ENCODE measurements at regions of chr7 and their contacts with region 1.

Region 1: DNA sequence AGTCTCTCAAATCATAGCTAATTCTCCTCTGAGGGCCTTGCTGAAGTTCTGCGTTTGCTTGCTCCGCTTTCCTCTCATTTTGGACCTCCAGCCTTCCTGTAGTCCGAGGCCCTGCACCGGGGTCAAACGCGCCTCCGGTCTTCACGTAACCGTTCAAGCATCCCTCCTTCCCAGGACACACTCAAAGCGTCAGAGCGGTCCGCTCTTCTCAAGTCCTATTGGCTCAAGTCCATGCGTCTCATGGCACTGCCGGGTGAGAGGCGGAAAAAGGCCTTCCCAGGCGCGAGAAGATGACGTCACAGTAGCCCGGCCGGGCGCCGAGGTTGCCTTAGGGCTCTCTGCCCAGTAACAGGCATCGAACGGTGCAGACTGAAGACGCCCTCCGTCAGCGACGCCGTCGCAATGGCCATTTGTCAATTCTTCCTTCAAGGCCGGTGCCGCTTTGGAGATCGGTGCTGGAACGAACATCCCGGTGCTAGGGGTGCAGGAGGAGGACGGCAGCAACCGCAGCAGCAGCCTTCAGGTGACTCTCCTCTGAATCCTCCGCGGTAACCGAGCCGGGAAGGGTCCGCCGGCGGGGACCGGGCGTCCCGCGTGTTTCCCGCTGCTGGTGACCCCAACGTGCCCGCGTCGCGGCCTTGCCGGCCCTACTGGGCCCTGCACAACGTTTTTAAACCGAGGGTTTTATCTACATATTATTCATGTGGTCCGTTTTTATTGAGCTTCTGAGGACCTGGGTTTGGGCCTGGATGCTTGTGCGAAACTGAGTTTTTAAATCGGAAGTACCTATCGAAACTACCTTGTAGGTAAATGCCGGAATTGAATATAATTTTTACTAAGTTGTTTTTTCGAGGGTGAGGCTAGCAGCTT is at the start of gene NUP42:
- DNase-seq: peak; percentile 97
- ATAC-seq: peak; percentile 95
- H3K4me3 ChIP-seq: peak within 1 kb of the TSS; percentile 74
- H3K27ac ChIP-seq: peak within 1 kb of the TSS; percentile 90
- H3K4me1 ChIP-seq: 0 out of 2 replicates have a peak, but pooled peaks cover 3% of the 10 kb centered on the region
- H3K27me3 ChIP-seq: no peaks in the 10 kb centered on the region
- CTCF ChIP-seq: no peak
- EP300 ChIP-seq: peak; percentile 42 to 62; a peak in 3 of 4 replicates
- POLR2A ChIP-seq: peak; percentile 99
- RAD21 ChIP-seq: no peak
- polyA plus RNA-seq, gene NUP42: 58.6 to 92.1 TPM

Region 2: DNA sequence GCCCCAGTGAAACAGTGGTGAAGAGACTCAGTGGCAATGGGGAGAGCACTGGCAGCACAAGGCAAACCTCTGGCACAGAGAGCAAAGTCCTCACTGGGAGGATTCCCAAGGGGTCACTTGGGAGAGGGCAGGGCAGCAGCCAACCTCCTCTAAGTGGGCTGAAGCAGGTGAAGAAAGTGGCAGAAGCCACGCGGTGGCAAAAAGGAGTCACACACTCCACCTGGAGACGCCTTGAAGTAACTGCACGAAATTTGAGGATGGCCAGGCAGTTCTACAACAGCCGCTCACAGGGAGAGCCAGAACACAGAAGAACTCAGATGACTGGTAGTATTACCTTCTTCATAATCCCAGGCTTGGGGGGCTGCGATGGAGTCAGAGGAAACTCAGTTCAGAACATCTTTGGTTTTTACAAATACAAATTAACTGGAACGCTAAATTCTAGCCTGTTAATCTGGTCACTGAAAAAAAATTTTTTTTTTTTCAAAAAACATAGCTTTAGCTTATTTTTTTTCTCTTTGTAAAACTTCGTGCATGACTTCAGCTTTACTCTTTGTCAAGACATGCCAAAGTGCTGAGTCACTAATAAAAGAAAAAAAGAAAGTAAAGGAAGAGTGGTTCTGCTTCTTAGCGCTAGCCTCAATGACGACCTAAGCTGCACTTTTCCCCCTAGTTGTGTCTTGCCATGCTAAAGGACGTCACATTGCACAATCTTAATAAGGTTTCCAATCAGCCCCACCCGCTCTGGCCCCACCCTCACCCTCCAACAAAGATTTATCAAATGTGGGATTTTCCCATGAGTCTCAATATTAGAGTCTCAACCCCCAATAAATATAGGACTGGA is 455.4 kb before region 1 on chr7:
- CTCF ChIA-PET with region 1: no interaction called
- POLR2A ChIA-PET with region 1: interaction called, 12 read pairs
- RAD21 ChIA-PET with region 1: no interaction called
- SMC1A ChIA-PET with region 1: no interaction called
- in situ Hi-C with region 1: no loop called
- intact Hi-C with region 1: no loop called
- DNase-seq: no peak
- ATAC-seq: peak; percentile 92
- H3K4me3 ChIP-seq: no peak overlapping the region
- H3K27ac ChIP-seq: no peak overlapping the region
- H3K4me1 ChIP-seq: peaks cover 5% of the 10 kb centered on the region; the same call in 1 of the 2 replicates
- H3K27me3 ChIP-seq: peaks cover 5 to 8% of the 10 kb centered on the region in 2 experiments
- CTCF ChIP-seq: peak; percentile 67 to 84 (median 77)
- EP300 ChIP-seq: no peak
- POLR2A ChIP-seq: no peak
- RAD21 ChIP-seq: peak; percentile 70

Region 3: DNA sequence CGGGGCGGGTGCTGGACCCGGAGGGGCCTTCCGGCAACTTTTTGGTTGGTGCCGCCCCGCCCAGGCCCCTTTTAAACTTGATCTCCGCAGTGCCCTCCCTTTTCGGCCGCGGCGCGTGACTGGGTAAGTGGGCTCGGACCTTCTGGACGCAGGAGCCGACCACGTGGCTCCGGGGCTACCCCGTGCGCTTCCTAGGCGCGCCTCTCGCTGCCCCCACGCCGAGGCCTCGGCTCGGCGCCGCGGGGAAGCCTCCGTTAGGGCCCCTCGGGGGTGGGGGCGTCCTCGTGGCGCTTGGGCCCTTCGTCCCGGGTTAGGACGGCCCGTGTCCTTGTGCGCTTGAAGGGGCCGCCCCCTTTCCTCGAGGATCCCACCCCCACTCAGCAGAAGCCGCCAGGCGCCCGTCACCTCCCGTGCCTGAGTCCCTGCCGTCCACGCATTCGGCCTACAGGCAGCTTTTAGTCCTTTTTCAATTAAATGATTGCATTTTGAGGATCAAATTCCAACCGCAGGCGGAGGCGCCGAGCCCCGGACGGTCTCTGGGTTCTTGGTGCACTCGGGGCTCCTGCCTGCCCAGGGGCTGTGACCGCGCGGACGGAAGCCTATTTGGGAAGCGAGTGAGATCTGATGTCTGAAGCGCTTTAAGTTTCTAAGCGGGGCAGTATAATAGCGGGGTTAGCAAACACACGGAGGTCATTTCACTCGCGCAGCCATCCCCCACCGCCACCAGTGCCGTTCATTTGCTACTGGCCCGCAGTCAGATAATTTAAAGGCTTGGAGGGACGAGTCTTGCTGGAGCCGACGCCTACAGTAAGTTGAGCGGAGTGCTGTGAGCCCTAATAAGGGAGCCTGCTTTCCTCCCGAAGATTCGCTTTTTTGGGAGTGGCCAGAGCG is 327.5 kb before region 1 on chr7:
- CTCF ChIA-PET with region 1: no interaction called
- POLR2A ChIA-PET with region 1: no interaction called
- RAD21 ChIA-PET with region 1: no interaction called
- SMC1A ChIA-PET with region 1: no interaction called
- in situ Hi-C with region 1: no loop called
- intact Hi-C with region 1: loop called (anchors 10 kb)
- DNase-seq: peak; percentile 63
- ATAC-seq: peak; percentile 84
- H3K4me3 ChIP-seq: peak overlapping the region; percentile 84
- H3K27ac ChIP-seq: peak overlapping the region; percentile 94
- H3K4me1 ChIP-seq: peaks cover 14% of the 10 kb centered on the region
- H3K27me3 ChIP-seq: no peaks in the 10 kb centered on the region
- CTCF ChIP-seq: peak in 1 of 3 experiments; percentile 44; a peak in 1 of 6 replicates
- EP300 ChIP-seq: 0 out of 4 replicates have a peak, but pooled peaks of 1 of the 2 experiments have one; percentile 21
- POLR2A ChIP-seq: peak; percentile 89
- RAD21 ChIP-seq: no peak

Region 4: DNA sequence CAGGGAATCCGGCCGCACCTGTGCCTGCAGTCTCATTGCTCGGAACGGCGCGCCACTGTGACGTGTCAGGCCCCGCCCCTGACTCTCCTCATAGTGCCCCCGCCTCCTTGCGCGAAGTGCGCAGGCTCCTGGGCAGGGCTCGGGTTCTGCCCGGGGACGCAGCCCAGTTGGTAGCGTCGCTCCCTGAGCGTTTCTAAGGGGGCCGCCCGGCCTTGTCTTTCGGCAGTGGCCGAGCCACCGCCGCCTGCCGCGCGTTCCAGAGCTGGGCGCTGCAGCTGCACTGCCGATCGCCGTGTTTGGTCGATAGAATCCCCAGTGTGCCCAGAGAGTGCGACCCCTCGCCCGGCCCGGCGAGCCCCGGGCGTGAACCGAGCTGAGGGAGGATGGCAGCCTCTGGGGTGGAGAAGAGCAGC is 76.3 kb before region 1 on chr7 and contains the start of gene KLHL7:
- CTCF ChIA-PET with region 1: interaction called, 14 read pairs
- POLR2A ChIA-PET with region 1: interaction called, 10 read pairs
- RAD21 ChIA-PET with region 1: interaction called, 7 read pairs
- SMC1A ChIA-PET with region 1: interaction called, 16 read pairs
- in situ Hi-C with region 1: no loop called
- intact Hi-C with region 1: loop called (anchors 1 kb)
- DNase-seq: peak; percentile 64
- ATAC-seq: peak; percentile 98
- H3K4me3 ChIP-seq: peak within 1 kb of the TSS; percentile 99
- H3K27ac ChIP-seq: peak within 1 kb of the TSS; percentile 77
- H3K4me1 ChIP-seq: peaks cover 7% of the 10 kb centered on the region; the same call in 1 of the 2 replicates
- H3K27me3 ChIP-seq: no peaks in the 10 kb centered on the region
- CTCF ChIP-seq: no peak
- EP300 ChIP-seq: no peak
- POLR2A ChIP-seq: peak; percentile 92
- RAD21 ChIP-seq: no peak
- polyA plus RNA-seq, gene KLHL7: 6.4 to 12.4 TPM

Region 5: GRCh38 chr7:23261843-23262452 is 80.0 kb after region 1 on chr7:
- CTCF ChIA-PET with region 1: interaction called, 50 read pairs
- POLR2A ChIA-PET with region 1: interaction called, 3 read pairs
- RAD21 ChIA-PET with region 1: interaction called, 15 read pairs
- SMC1A ChIA-PET with region 1: interaction called, 11 read pairs
- in situ Hi-C with region 1: no loop called
- intact Hi-C with region 1: no loop called
- DNase-seq: no peak
- ATAC-seq: peak; percentile 95
- H3K4me3 ChIP-seq: no peak overlapping the region
- H3K27ac ChIP-seq: no peak overlapping the region
- H3K4me1 ChIP-seq: peaks cover 11% of the 10 kb centered on the region
- H3K27me3 ChIP-seq: no peaks in the 10 kb centered on the region; a peak in 1 of 4 replicates
- CTCF ChIP-seq: peak; percentile 83 to 94 (median 86)
- EP300 ChIP-seq: no peak
- POLR2A ChIP-seq: no peak
- RAD21 ChIP-seq: peak; percentile 87

Region 6: DNA sequence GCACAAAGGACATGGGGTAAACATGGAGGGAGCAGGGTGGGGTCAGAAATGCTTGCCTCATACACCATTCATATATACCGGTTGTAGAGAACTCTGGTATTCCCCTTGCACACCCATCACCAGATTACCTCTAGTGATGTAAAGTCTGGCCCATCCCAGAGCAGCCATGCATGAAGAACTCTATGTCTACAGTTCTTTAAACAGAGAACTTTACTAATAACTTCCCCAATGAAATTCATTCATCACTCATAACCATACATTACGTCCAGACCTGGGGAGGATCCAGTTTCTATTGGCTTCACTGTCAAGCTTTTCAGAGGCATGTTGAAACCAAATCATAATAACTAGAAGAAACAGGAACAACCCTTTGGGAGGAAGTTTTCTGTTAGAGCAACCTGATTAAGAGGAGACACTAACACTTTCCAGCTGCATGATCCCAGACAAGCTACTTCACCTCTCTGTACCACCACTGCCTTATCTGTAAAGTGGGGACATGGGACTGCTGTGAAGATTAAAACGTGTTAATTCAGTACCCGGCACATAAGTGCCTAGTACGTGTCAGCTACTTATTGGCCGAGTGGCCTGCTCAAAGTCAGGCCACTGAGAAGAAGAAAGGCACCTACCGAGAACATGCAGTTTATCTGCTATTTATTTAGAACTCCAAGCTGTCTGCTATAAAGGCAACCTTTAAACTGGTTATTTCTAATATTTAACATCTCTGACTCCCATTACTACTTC is 228.7 kb after region 1 on chr7:
- CTCF ChIA-PET with region 1: no interaction called
- POLR2A ChIA-PET with region 1: no interaction called
- RAD21 ChIA-PET with region 1: no interaction called
- SMC1A ChIA-PET with region 1: no interaction called
- in situ Hi-C with region 1: no loop called
- intact Hi-C with region 1: loop called (anchors 10 kb)
- DNase-seq: peak; percentile 89
- ATAC-seq: peak; percentile 97
- H3K4me3 ChIP-seq: no peak overlapping the region; the same call in 1 of the 2 replicates
- H3K27ac ChIP-seq: peak overlapping the region; percentile 82
- H3K4me1 ChIP-seq: peaks cover 20% of the 10 kb centered on the region
- H3K27me3 ChIP-seq: no peaks in the 10 kb centered on the region
- CTCF ChIP-seq: no peak
- EP300 ChIP-seq: peak; percentile 65 to 69; a peak in 3 of 4 replicates
- POLR2A ChIP-seq: no peak
- RAD21 ChIP-seq: no peak

Region 7: DNA sequence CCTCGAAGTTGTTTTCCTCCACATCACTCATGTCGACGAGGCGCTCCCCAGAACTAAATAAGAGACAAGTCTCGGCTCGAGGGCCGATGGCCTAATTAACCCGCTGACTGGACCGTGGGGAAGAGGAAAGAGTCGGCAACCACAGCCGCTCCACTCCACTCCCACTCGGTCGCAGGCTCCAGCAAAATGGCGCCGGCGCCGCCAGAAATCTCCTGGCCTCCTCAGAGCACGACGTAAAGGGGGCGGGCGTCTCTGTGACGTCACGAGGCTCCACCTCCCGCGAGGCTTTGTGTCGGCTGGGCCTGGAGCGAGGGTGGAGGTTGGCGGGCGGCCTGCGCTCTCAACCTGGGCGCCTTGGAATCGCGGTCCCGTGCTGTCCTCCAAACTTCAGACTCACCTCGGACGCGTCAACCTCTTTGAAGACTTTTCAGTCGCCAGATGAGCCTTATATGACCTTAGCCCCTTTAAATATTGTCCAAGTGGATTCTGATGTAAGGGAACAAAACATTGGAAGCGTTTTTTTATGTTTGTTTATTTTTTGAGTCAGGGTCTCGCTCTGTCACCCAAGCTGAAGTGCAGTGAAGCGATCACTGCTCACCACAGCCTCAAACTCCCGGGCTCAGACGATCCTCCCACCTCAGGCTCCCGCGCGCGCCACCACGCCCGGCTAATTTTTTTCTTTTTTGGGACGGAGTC is 350.0 kb after region 1 on chr7 and contains the start of gene TRA2A:
- CTCF ChIA-PET with region 1: interaction called, 3 read pairs
- POLR2A ChIA-PET with region 1: no interaction called
- RAD21 ChIA-PET with region 1: interaction called, 3 read pairs
- SMC1A ChIA-PET with region 1: no interaction called
- in situ Hi-C with region 1: no loop called
- intact Hi-C with region 1: loop called (anchors 10 kb)
- DNase-seq: peak; percentile 86
- ATAC-seq: peak; percentile 84
- H3K4me3 ChIP-seq: peak within 1 kb of the TSS; percentile 99
- H3K27ac ChIP-seq: peak within 1 kb of the TSS; percentile 99
- H3K4me1 ChIP-seq: 0 out of 2 replicates have a peak, but pooled peaks cover 2% of the 10 kb centered on the region
- H3K27me3 ChIP-seq: no peaks in the 10 kb centered on the region
- CTCF ChIP-seq: no peak
- EP300 ChIP-seq: 0 out of 4 replicates have a peak, but pooled peaks of 1 of the 2 experiments have one; percentile 22
- POLR2A ChIP-seq: peak; percentile 98
- RAD21 ChIP-seq: no peak
- polyA plus RNA-seq, gene TRA2A: 69.2 to 83.1 TPM

Measured in GM12878 (cell line).